K562 (cell line): ENCODE measurements at regions of chr1 and their contacts with region 1.

Region 1: DNA sequence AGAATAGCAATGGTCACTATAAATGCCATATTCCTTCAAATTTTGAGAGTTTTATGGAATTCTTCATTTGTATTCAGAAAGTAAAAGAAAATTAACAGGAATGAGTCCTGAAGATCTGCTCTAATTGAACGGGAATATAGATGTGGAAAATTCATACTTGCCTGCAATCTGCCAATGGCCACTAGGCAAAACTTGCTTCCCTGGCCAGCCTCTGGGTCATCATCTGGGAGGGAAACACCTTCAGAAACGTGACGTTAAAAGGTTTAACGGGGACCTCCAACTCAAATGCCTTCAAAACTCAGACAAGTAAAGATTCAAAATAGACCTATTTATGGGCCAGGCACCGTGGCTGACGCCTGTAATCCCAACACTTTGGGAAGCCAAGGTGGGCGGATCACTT is 21.7 kb upstream of the CTSK start:
- DNase-seq: peak in 2 of 4 experiments; percentile 24 to 34
- ATAC-seq: peak; percentile 60; the same call in 1 of the 3 replicates
- H3K4me3 ChIP-seq: no peak overlapping the region
- H3K27ac ChIP-seq: no peak overlapping the region
- H3K4me1 ChIP-seq: no peaks in the 10 kb centered on the region
- H3K27me3 ChIP-seq: no peaks in the 10 kb centered on the region
- CTCF ChIP-seq: peak; percentile 40 to 46 (median 40); a peak in 5 of 6 replicates
- EP300 ChIP-seq: no peak
- POLR2A ChIP-seq: no peak
- RAD21 ChIP-seq: no peak

Region 2: GRCh38 chr1:150730130-150730721 is 99.5 kb before region 1 on chr1:
- CTCF ChIA-PET with region 1: no interaction called
- POLR2A ChIA-PET with region 1: no interaction called
- in situ Hi-C with region 1: no loop called
- intact Hi-C with region 1: no loop called
- DNase-seq: no peak
- ATAC-seq: no peak
- H3K4me3 ChIP-seq: no peak overlapping the region
- H3K27ac ChIP-seq: no peak overlapping the region
- H3K4me1 ChIP-seq: no peaks in the 10 kb centered on the region; a peak in 1 of 5 replicates
- H3K27me3 ChIP-seq: no peaks in the 10 kb centered on the region
- CTCF ChIP-seq: no peak
- EP300 ChIP-seq: no peak
- POLR2A ChIP-seq: no peak
- RAD21 ChIP-seq: no peak

Region 3: DNA sequence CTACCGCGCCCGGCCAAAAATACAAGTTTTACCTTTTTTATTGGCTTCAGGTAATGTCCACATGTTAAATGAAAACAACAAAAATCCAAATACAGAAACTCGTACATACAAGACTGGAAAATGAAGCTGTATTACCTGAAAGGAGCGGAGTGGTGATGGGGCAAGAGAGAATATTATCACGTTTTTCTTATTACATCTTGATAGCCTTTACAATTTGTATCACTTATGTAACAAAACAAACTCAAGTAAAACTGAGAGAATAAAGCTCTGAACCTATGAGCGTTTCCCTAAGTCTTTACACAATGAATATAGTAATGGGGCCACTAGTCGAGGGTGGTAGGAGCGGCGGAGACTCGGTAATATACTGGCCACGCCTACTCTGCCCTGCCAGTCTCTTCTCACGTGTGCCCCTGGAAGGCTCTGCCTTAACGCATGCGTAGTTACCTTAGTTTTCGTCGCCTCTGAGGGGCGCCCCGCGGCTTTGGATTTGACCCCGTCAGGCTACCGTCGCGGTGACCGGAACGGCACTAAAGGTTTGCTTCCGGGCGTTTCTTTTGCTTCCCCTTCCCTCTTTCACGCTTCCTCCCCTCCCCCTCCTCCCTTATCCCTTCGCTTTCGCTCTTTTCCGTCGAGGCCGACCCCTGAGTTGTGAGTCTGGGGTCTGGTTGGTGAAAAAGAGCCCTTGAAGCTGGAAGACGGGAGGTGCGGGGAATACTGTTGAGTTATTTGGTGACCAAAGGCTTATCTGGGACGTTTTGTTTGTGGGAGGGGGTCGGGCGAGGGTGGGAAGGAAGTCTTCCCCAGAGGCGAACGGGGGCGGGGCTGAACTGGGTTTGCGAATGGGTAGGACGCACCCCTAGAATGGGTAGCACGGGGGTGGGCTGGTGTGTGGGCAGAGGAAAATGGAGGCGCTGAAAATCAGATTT is 96.3 kb after region 1 on chr1 and contains the start of gene SETDB1:
- CTCF ChIA-PET with region 1: interaction called, 3 read pairs
- POLR2A ChIA-PET with region 1: no interaction called
- in situ Hi-C with region 1: no loop called
- intact Hi-C with region 1: loop called (anchors 10 kb)
- DNase-seq: peak; percentile 91 to 98 (median 94)
- ATAC-seq: peak; percentile 97
- H3K4me3 ChIP-seq: peak within 1 kb of the TSS; percentile 70
- H3K27ac ChIP-seq: peak within 1 kb of the TSS; percentile 90
- H3K4me1 ChIP-seq: peaks cover 3 to 9% of the 10 kb centered on the region in 2 experiments; a peak in 2 of 5 replicates
- H3K27me3 ChIP-seq: no peaks in the 10 kb centered on the region
- CTCF ChIP-seq: peak; percentile 23 to 42 (median 25); a peak in 3 of 6 replicates
- EP300 ChIP-seq: peak; percentile 67
- POLR2A ChIP-seq: peak; percentile 85
- RAD21 ChIP-seq: peak in 1 of 2 experiments; percentile 16; a peak in 1 of 4 replicates
- polyA plus RNA-seq, gene SETDB1: 21.5 to 21.8 TPM

Region 4: GRCh38 chr1:150995896-150996295 is 166.2 kb after region 1 on chr1:
- CTCF ChIA-PET with region 1: no interaction called
- POLR2A ChIA-PET with region 1: no interaction called
- in situ Hi-C with region 1: no loop called
- intact Hi-C with region 1: loop called (anchors 10 kb)
- DNase-seq: peak in 3 of 4 experiments; percentile 38 to 55 (median 39)
- ATAC-seq: peak; percentile 34; the same call in 1 of the 3 replicates
- H3K4me3 ChIP-seq: no peak overlapping the region
- H3K27ac ChIP-seq: no peak overlapping the region
- H3K4me1 ChIP-seq: peaks cover 27 to 33% of the 10 kb centered on the region in 2 experiments
- H3K27me3 ChIP-seq: no peaks in the 10 kb centered on the region
- CTCF ChIP-seq: peak; percentile 56 to 76 (median 73); a peak in 5 of 6 replicates
- EP300 ChIP-seq: no peak
- POLR2A ChIP-seq: no peak
- RAD21 ChIP-seq: peak; percentile 64 to 70